OCI-LY7 (cell line): ENCODE measurements at regions of chr9 and their contacts with region 1.

Region 1: DNA sequence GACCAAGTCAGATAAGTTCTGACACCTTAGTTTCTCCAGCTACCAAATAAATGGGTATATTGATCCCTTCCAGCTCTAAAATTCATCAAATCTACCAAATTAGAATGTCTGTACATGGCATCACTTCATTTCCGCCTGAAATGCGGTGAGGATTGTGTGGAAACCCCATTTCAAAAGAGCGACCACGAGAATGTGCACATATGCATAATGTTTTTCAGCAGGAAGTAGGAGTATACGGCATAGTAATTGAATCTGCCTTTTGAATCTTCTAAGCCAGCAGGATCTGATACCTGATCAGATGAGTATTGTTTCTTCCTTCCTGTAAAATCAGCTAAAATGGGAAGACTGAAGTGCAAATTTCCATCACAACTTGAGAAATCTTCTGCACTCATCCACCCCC is 418.6 kb downstream of the TMEM38B start:
- DNase-seq: no peak
- H3K4me3 ChIP-seq: no peak overlapping the region
- H3K27ac ChIP-seq: no peak overlapping the region
- H3K4me1 ChIP-seq: no peaks in the 10 kb centered on the region
- CTCF ChIP-seq: no peak

Region 2: DNA sequence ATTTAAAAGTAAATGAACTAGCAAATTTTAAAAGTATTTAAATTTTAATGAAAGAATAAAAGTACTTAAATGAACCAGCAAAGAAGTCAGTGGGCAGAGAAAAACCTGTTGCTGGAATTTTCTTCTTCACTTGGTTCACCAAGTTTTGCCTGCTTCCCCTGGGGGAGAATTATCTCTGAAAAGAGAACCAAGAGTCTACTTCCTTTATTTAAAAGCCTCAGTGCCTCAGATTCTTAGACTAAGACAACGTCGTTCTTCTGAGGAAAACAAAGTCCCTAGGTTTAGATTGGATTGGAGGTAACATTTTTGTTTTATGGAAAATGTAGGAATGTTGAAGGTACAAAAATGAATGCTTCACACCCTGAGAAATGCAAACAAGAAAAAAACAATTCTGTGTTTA is 1384.0 kb after region 1 on chr9:
- CTCF ChIA-PET with region 1: no interaction called
- POLR2A ChIA-PET with region 1: interaction called, 15 read pairs
- intact Hi-C with region 1: no loop called
- DNase-seq: no peak
- H3K4me3 ChIP-seq: no peak overlapping the region
- H3K27ac ChIP-seq: no peak overlapping the region
- H3K4me1 ChIP-seq: no peaks in the 10 kb centered on the region
- CTCF ChIP-seq: no peak